ENCODE measurements at regions of chr17 and their contacts with region 1.

Region 1: DNA sequence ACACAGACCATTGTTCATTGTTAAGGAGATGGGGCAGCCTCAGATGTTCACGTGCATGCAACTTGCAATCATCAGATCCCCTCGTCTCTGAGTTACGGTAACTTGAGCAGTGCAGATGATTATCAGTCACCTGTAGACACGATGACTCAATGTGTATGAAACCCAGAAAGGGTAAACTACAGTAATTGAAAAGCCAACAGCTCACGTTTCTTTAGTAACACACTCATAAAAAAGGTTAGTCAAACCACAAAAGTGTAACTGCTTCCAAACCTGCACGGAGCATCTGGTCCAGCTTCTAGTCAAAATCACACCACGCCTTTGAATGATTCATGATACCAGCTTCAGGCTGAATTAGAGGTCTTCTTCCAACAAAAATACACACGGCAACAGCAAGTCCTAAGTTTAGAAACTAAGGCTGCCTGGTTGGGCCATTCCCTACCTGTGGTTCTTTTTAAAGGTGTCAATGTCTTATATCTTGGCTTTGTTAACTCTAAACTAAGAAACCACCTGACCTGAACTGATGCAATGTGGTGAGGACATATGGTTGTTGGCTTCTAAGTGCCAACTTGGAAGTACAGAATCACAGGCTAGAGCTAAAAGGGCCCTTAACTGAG is 32.3 kb downstream of the GRB7 start:
- DNase-seq: peak; percentile 63
- H3K4me3 Mint-ChIP-seq: no peak overlapping the region
- H3K27ac Mint-ChIP-seq: peak overlapping the region; percentile 57
- H3K4me1 Mint-ChIP-seq: peaks cover 78% of the 10 kb centered on the region
- H3K27me3 Mint-ChIP-seq: no peaks in the 10 kb centered on the region

Region 2: GRCh38 chr17:39687811-39688518 is 82.1 kb before region 1 on chr17 and contains the start of gene PGAP3:
- intact Hi-C with region 1: loop called (anchors 10 kb)
- DNase-seq: peak; percentile 77
- H3K4me3 Mint-ChIP-seq: peak within 1 kb of the TSS; percentile 87
- H3K27ac Mint-ChIP-seq: peak within 1 kb of the TSS; percentile 92
- H3K4me1 Mint-ChIP-seq: peaks cover 17% of the 10 kb centered on the region
- H3K27me3 Mint-ChIP-seq: no peaks in the 10 kb centered on the region
- total RNA-seq, gene PGAP3: 12.9 and 14.0 TPM in 2 replicates

Region 3: GRCh38 chr17:39754161-39754951 is 15.7 kb before region 1 on chr17:
- intact Hi-C with region 1: loop called (anchors 1 kb)
- DNase-seq: peak; percentile 98
- H3K4me3 Mint-ChIP-seq: peak overlapping the region; percentile 19
- H3K27ac Mint-ChIP-seq: peak overlapping the region; percentile 56
- H3K4me1 Mint-ChIP-seq: peaks cover 52% of the 10 kb centered on the region
- H3K27me3 Mint-ChIP-seq: no peaks in the 10 kb centered on the region

Region 4: GRCh38 chr17:39813631-39814030 is 43.5 kb after region 1 on chr17:
- intact Hi-C with region 1: loop called (anchors 1 kb)
- DNase-seq: peak; percentile 60
- H3K4me3 Mint-ChIP-seq: peak overlapping the region; percentile 62
- H3K27ac Mint-ChIP-seq: peak overlapping the region; percentile 78
- H3K4me1 Mint-ChIP-seq: peaks cover 49% of the 10 kb centered on the region
- H3K27me3 Mint-ChIP-seq: no peaks in the 10 kb centered on the region

Region 5: GRCh38 chr17:40038882-40039513 is 268.9 kb after region 1 on chr17:
- intact Hi-C with region 1: no loop called
- DNase-seq: no peak
- H3K4me3 Mint-ChIP-seq: no peak overlapping the region
- H3K27ac Mint-ChIP-seq: no peak overlapping the region
- H3K4me1 Mint-ChIP-seq: no peaks in the 10 kb centered on the region
- H3K27me3 Mint-ChIP-seq: no peaks in the 10 kb centered on the region

Measured in activated T-helper 2 cell treated with anti-CD3 and anti-CD28 coated beads, Interferon-gamma antibody, Interleukin-2, Interleukin-4, amounts not matched to agents 10 μg/mL and 5 μg/mL and 100 μg/mL, durations not matched to agents 14 hours and 24 hours and 36 hours (primary cell).